Aorta (tissue), 5 donors: ENCODE measurements at regions of chr9 and their contacts with region 1.

Region 1: GRCh38 chr9:37422289-37423104 is at the start of gene GRHPR:
- DNase-seq: peak; percentile 93 to 98
- ATAC-seq: peak; percentile 97
- H3K4me3 ChIP-seq: peak within 1 kb of the TSS; percentile 55 to 78
- H3K27ac ChIP-seq: peak within 1 kb of the TSS in 1 of 2 donors; percentile 49
- H3K4me1 ChIP-seq: no peaks in the 10 kb centered on the region
- H3K27me3 ChIP-seq: no peaks in the 10 kb centered on the region
- total RNA-seq, gene GRHPR: 59.4 to 75.3 TPM

Region 2: DNA sequence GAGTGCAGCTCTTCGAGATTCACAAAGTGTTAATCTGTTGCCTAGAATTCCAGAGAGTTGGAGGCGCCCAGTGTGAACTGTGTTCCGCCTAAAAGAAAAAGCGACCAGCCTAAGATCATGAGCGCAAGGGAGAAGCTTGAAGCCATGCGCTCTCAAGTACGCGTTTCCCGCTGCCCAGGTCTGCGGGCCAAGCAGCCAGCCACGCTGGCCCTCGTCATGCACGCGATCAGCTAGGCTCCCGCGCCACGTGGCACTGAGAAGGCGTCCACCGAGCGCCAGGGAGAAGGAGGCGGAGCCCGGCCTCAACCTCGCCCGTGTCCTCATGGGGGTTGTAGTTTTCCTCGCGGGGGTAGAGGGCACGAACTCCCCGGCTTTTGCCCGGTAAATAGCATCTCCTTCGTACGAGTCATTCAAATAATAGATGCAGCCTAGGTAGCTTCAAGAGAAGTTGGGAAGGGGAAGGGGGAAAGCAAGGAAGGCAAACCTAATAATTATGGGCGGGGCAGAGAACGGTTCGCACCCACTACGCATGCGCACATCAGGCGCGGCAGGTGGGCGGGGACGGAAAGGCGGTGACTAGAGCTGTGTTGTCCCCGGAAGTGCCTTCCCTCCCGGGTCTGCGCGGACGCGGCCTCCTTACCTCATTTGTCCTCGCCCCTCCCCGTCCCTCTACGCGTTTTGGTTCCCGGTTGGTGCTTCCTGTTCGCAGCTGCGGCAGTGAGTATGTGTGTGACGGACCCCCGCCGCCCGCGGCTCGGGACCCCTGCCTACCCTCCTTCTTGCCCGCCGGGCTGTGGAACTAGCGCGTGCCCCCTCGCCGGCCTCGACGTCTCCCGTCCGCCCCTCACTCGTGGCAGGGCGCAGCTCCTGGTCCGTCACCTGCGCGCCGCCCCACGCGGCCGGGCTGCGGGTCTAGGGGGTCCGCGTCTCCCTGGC is 302.3 kb before region 1 on chr9 and contains the start of gene ZCCHC7:
- intact Hi-C with region 1: loop called in 1 of 2 experiments (anchors 2 kb)
- DNase-seq: peak; percentile 98
- ATAC-seq: peak; percentile 100
- H3K4me3 ChIP-seq: peak within 1 kb of the TSS; percentile 55 to 86
- H3K27ac ChIP-seq: peak within 1 kb of the TSS; percentile 37 to 61
- H3K4me1 ChIP-seq: no peaks in the 10 kb centered on the region
- H3K27me3 ChIP-seq: no peaks in the 10 kb centered on the region
- total RNA-seq, gene ZCCHC7: 27.0 to 30.5 TPM

Region 3: GRCh38 chr9:37449862-37450632 is 27.6 kb after region 1 on chr9:
- intact Hi-C with region 1: no loop called
- DNase-seq: no peak
- ATAC-seq: no peak
- H3K4me3 ChIP-seq: no peak overlapping the region
- H3K27ac ChIP-seq: no peak overlapping the region
- H3K4me1 ChIP-seq: peaks cover 2 to 5% of the 10 kb centered on the region in 2 donors
- H3K27me3 ChIP-seq: no peaks in the 10 kb centered on the region

Region 4: GRCh38 chr9:37465249-37466036 is 42.9 kb after region 1 on chr9 and contains the start of gene ZBTB5:
- intact Hi-C with region 1: loop called (anchors 2 to 5 kb)
- DNase-seq: peak; percentile 99
- ATAC-seq: peak; percentile 96
- H3K4me3 ChIP-seq: peak within 1 kb of the TSS; percentile 55 to 69
- H3K27ac ChIP-seq: peak within 1 kb of the TSS; percentile 39 to 96
- H3K4me1 ChIP-seq: peaks cover 0 to 11% of the 10 kb centered on the region in 2 donors
- H3K27me3 ChIP-seq: no peaks in the 10 kb centered on the region
- total RNA-seq, gene ZBTB5: 10.7 to 11.4 TPM

Region 5: GRCh38 chr9:37495571-37495970 is 73.1 kb after region 1 on chr9:
- intact Hi-C with region 1: loop called in 1 of 2 experiments (anchors 2 kb)
- DNase-seq: no peak
- ATAC-seq: peak; percentile 73
- H3K4me3 ChIP-seq: no peak overlapping the region
- H3K27ac ChIP-seq: peak overlapping the region; percentile 18 to 94
- H3K4me1 ChIP-seq: peaks cover 0 to 3% of the 10 kb centered on the region in 2 donors
- H3K27me3 ChIP-seq: no peaks in the 10 kb centered on the region